ENCODE measurements at regions of chr20 and their contacts with region 1.

Region 1: DNA sequence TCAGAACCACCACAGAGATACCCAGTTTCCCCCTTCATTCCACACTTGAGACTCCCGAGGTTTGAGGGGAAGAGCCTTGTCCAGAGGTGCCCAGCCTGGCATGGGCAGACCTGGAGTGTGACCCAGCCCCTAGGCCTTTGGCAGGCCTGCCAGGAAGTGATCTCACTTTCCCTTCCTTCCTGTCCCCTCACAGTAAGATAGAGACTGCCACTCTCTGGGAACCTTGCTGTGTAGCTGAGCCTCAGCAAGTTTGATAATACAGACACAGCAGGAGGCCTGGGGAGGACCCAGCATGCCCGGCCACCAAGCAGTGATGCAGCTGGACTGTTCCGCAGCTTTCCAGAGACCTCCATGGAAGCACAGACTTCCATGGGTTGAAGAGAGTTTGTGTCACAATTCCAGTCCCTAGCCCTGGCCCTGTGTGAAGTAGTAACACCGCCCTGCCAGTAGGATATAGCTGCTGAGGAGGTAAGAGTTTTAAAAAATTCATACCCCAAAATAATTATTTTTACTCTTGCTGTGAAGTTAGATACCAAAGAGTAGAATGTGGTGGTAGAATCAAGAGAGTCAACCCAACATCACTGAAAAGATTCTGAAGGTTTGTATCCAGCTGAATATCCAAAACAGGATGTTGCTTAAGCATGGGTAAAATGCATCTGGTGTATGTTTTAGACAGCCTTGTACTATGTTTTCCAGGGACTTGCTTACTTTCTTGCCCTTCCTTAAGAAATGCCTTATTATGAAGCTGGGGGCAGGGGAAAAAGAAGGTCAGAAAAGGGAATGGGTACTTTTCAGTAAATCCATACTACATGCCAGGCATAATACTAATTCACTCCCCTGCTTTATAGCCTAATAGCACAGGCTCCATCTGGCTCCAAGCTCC is 16.3 kb downstream of the PKIG start:
- DNase-seq: peak in 1 of 2 donors; percentile 49
- H3K4me3 ChIP-seq: no peak overlapping the region
- H3K27ac ChIP-seq: peak overlapping the region; percentile 20 to 89 (median 83)
- H3K4me1 ChIP-seq: peaks cover 49 to 91% (median 79%) of the 10 kb centered on the region in 4 donors
- H3K27me3 ChIP-seq: no peaks in the 10 kb centered on the region
- CTCF ChIP-seq: no peak
- EP300 ChIP-seq: no peak
- POLR2A ChIP-seq: no peak

Region 2: DNA sequence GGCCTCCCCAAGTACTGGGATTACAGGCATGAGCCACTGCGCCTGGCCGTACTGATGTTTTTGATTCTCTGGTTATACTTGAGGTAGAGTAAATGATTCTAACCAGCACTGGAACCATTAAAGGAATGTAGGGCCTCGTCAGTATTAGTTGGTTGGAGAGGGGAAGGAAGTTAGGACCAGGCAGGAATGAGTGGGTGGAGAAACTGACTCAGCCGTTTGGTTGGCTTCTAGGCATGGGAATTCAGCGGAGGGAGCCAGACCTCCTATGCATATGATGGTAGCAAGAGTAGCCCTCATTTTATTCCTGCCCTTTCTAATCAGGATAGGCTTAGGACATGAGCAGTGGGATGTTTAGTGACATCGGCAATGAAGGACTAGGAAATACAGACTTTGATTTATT is 57.8 kb before region 1 on chr20:
- intact Hi-C with region 1: loop called (anchors 10 kb)
- DNase-seq: no peak
- H3K4me3 ChIP-seq: no peak overlapping the region
- H3K27ac ChIP-seq: peak overlapping the region in 3 of 5 donors; percentile 43 to 72 (median 54)
- H3K4me1 ChIP-seq: peaks cover 0 to 45% (median 23%) of the 10 kb centered on the region in 4 donors
- H3K27me3 ChIP-seq: no peaks in the 10 kb centered on the region
- CTCF ChIP-seq: no peak
- EP300 ChIP-seq: no peak
- POLR2A ChIP-seq: no peak

Region 3: GRCh38 chr20:44720617-44720993 is 121.9 kb after region 1 on chr20:
- intact Hi-C with region 1: no loop called
- DNase-seq: no peak
- H3K4me3 ChIP-seq: no peak overlapping the region
- H3K27ac ChIP-seq: peak overlapping the region in 3 of 5 donors; percentile 15 to 44 (median 40)
- H3K4me1 ChIP-seq: peaks cover 3 to 28% (median 24%) of the 10 kb centered on the region in 4 donors
- H3K27me3 ChIP-seq: peaks cover 0 to 6% (median 0%) of the 10 kb centered on the region in 3 donors
- CTCF ChIP-seq: no peak
- EP300 ChIP-seq: no peak
- POLR2A ChIP-seq: no peak

Region 4: GRCh38 chr20:45229264-45230056 is 630.8 kb after region 1 on chr20:
- intact Hi-C with region 1: no loop called
- DNase-seq: peak; percentile 20 to 63
- H3K4me3 ChIP-seq: no peak overlapping the region
- H3K27ac ChIP-seq: no peak overlapping the region
- H3K4me1 ChIP-seq: peaks cover 0 to 7% (median 0%) of the 10 kb centered on the region in 4 donors
- H3K27me3 ChIP-seq: peaks cover 0 to 17% (median 10%) of the 10 kb centered on the region in 3 donors
- CTCF ChIP-seq: peak in 4 of 7 experiments; percentile 25 to 50 (median 32)
- EP300 ChIP-seq: no peak
- POLR2A ChIP-seq: no peak